ENCODE measurements at regions of chr14 and their contacts with region 1.

Region 1: DNA sequence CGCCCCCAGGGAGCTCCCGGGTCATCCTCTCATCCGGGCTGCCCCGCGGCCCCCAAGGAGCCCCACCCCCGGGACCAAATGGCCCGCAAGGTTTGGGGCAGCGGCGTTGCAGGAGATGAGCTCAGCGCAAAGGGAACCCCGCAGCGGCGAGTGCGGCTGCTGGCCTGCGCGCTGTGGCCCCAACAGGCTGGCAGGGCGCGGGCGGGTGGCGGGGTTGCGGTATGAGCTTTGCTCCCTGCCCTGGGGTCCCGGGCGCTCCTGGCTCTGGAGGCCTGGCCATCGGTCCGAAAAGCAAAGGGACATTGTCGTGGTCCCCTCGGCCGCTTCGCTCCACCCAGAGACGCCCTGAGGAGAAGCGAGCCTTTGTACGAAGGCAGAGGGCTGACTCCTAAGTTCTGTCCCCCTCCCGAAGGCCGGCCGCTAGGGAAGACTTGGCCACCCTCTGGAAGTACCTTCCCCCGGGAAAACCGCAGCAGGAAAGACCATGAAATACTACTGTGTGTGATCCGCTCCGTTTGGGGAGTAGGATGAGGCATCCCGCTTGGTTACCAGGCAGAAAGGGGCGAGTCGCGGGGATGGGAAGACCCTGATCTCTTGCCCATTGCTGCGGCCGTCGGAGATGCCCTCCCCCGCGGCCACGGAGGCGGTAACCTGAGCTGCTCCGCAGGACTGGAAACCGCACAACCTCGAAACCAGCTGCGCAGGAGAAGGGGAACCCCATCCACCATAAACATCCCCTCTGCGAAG is 618 bp upstream of the NID2 start:
- DNase-seq: peak; percentile 84

Region 2: DNA sequence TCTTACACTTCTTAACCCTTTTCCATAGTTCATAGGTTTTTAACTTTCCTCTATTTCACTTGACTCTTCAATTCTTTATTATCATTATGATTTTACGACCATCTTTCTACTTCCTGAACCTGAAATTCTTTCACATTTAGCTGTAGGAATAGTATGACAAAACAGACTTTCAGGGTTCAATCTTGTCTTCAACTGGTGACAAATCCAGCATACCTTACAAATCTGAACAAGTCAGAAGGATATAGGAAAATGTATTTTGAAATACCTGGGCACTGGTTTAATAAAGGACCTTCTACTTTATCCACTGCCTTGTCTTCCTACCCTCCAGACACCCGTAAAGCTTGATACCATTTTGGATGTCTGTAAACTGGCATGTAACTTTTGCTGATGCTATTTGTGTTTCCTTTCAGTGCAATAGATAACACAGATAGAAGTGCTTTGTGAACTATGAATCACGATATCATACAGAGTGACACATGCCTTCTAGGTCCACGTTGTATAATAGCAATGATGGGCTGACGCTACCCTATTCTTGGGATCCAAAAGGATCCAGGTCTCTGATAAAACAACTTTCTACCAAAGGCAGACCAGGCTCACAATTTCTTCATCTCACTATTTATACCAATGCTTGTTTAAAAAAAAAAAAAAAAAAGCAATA is 1323.9 kb before region 1 on chr14:
- intact Hi-C with region 1: loop called in 1 of 2 experiments (anchors 5 kb)
- DNase-seq: no peak

Measured in posterior vena cava (tissue), 2 donors.